Ascending aorta (tissue), 2 donors: ENCODE measurements at regions of chr11 and their contacts with region 1.

Region 1: GRCh38 chr11:60906132-60906972 is at the start of gene PRPF19:
- DNase-seq: peak; percentile 87 to 99
- H3K4me3 ChIP-seq: peak within 1 kb of the TSS; percentile 98 to 99
- H3K27ac ChIP-seq: peak within 1 kb of the TSS; percentile 97 to 99
- H3K4me1 ChIP-seq: peaks cover 6 to 18% of the 10 kb centered on the region in 2 donors
- H3K27me3 ChIP-seq: no peaks in the 10 kb centered on the region
- CTCF ChIP-seq: no peak
- total RNA-seq, gene PRPF19: 61.6 TPM

Region 2: GRCh38 chr11:59560702-59561469 is 1345.5 kb before region 1 on chr11:
- intact Hi-C with region 1: loop called (anchors 5 kb)
- DNase-seq: peak; percentile 38 to 91
- H3K4me3 ChIP-seq: peak overlapping the region; percentile 83
- H3K27ac ChIP-seq: peak overlapping the region; percentile 74 to 89
- H3K4me1 ChIP-seq: peaks cover 0 to 8% of the 10 kb centered on the region in 2 donors
- H3K27me3 ChIP-seq: no peaks in the 10 kb centered on the region
- CTCF ChIP-seq: no peak

Region 3: DNA sequence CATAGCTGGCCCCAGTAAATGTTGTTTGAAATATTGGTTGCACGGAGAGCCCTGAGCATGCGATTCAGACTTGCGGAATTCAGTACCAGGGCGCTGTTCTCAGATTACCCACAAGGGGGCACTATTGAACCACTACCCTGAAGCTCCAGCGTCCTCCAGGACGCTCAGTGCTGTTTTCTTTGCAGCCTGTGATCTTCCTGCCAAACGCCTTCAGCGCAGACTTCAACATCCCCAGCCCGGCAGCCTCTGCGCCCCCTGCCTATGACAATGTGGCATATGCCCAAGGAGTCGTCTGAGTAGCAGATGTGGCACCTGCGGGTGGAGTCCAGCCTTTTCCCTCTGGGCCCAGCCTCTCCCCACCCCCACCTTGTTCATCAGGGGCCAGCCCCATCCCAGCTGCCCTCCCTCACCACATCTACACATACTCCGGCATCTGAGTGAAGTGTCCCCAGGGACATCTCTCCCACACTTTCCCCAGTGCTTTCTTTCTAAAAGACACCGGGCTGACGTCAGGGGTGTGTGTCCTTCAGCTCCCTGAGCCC is 130.9 kb before region 1 on chr11:
- intact Hi-C with region 1: no loop called
- DNase-seq: peak in 1 of 2 donors; percentile 88
- H3K4me3 ChIP-seq: no peak overlapping the region
- H3K27ac ChIP-seq: no peak overlapping the region
- H3K4me1 ChIP-seq: peaks cover 0 to 3% of the 10 kb centered on the region in 2 donors
- H3K27me3 ChIP-seq: no peaks in the 10 kb centered on the region
- CTCF ChIP-seq: peak; percentile 57 to 89 (median 84)

Region 4: GRCh38 chr11:60841797-60842667 is 64.3 kb before region 1 on chr11 and contains the start of gene CCDC86:
- intact Hi-C with region 1: loop called (anchors 1 kb)
- DNase-seq: peak; percentile 90 to 98
- H3K4me3 ChIP-seq: peak within 1 kb of the TSS; percentile 76 to 94
- H3K27ac ChIP-seq: peak within 1 kb of the TSS; percentile 66 to 73
- H3K4me1 ChIP-seq: peaks cover 19 to 24% of the 10 kb centered on the region in 2 donors
- H3K27me3 ChIP-seq: no peaks in the 10 kb centered on the region
- CTCF ChIP-seq: no peak
- total RNA-seq, gene CCDC86: 16.0 TPM

Region 5: GRCh38 chr11:61161190-61162091 is 255.1 kb after region 1 on chr11 and contains the start of gene VPS37C:
- intact Hi-C with region 1: loop called (anchors 2 kb)
- DNase-seq: peak; percentile 57 to 94
- H3K4me3 ChIP-seq: peak within 1 kb of the TSS; percentile 73 to 91
- H3K27ac ChIP-seq: peak within 1 kb of the TSS; percentile 96 to 99
- H3K4me1 ChIP-seq: peaks cover 3 to 24% of the 10 kb centered on the region in 2 donors
- H3K27me3 ChIP-seq: no peaks in the 10 kb centered on the region
- CTCF ChIP-seq: peak in 1 of 3 experiments; percentile 22
- total RNA-seq, gene VPS37C: 25.8 TPM